Activated B cell treated with CpG ODN at 0.5 μM for 24 hours (primary cell): ENCODE measurements at regions of chr14 and their contacts with region 1.

Region 1: DNA sequence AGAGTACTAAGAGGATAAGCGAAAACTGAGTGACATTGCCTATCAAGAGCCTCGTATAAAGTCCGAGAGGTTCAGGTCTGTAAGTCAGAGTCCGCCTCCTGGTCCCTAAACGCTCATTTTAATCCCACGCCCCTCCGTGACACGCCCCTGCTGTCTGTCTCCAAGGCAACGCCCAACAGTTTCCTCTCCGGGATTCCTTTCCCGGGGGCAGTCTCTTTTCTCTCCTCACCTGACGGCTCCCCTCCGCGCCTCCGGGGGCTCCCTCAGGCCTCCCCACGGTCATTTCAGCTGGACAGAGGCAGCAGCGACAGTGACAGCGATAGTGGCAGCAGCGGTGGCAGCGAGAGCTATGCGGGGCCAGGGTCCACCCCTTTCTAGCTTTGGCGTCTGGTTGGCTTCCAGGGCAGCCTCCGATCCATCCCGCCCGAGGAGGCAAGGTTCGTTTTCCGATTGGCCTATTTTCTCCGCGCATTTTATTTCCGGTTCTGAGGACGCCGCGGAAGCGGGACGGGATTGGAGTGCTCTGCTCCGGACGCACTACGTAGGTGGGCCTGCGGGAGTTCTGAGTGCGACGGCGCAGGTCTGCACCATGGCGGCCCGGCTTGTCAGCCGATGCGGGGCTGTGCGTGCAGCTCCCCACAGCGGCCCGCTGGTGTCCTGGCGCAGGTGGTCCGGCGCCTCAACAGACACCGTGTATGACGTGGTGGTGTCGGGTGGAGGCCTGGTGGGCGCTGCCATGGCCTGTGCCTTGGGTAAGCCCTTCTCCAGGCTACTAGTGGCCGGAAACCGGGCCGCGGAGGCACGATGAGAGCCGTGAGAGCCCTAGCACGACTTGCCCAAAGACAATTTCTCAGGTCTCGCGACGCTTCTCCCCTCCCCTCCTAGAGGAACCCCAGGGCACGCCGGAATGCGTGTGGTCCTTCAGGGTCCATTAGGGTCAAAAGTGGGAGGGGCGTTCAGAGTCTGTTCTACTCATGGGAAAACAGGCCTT is at the starts of genes COQ6 and FAM161B:
- DNase-seq: peak; percentile 84
- ATAC-seq: peak; percentile 92
- H3K4me3 Mint-ChIP-seq: peak within 1 kb of the TSS; percentile 99
- H3K27ac Mint-ChIP-seq: peak within 1 kb of the TSS; percentile 91
- H3K4me1 Mint-ChIP-seq: peaks cover 17% of the 10 kb centered on the region
- H3K27me3 Mint-ChIP-seq: no peaks in the 10 kb centered on the region
- CTCF ChIP-seq: no peak
- total RNA-seq, gene COQ6: 23.0 and 30.7 TPM in 2 replicates
- total RNA-seq, gene FAM161B: 2.3 TPM in 2 replicates

Region 2: DNA sequence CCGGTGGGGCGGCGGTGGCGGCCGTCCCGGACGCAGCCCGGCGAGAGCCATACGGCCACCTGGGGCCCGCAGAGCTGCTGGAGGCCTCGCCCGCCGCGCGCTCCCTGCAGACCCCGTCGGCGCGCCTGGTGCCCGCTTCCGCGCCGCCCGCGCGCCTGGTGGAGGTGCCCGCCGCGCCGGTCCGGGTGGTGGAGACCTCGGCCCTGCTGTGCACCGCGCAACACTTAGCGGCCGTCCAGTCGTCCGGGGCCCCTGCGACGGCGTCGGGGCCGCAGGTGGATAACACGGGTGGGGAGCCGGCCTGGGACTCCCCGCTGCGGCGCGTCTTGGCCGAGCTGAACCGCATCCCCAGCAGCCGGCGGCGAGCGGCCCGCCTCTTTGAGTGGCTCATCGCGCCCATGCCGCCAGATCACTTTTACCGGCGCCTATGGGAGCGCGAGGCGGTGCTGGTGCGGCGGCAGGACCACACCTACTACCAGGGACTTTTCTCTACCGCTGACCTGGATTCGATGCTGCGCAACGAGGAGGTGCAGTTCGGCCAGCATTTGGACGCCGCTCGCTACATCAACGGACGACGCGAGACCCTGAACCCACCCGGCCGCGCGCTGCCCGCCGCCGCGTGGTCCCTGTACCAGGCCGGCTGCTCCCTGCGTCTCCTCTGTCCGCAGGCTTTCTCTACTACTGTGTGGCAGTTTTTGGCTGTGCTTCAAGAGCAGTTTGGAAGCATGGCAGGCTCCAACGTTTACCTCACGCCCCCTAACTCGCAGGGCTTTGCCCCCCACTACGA is 458.6 kb before region 1 on chr14:
- CTCF ChIA-PET with region 1: no interaction called
- POLR2A ChIA-PET with region 1: no interaction called
- intact Hi-C with region 1: no loop called
- DNase-seq: no peak
- ATAC-seq: peak; percentile 51
- H3K4me3 Mint-ChIP-seq: peak overlapping the region; percentile 88
- H3K27ac Mint-ChIP-seq: peak overlapping the region; percentile 80
- H3K4me1 Mint-ChIP-seq: peaks cover 49% of the 10 kb centered on the region
- H3K27me3 Mint-ChIP-seq: no peaks in the 10 kb centered on the region
- CTCF ChIP-seq: no peak

Region 3: GRCh38 chr14:73696466-73697400 is 253.3 kb before region 1 on chr14:
- CTCF ChIA-PET with region 1: no interaction called
- POLR2A ChIA-PET with region 1: interaction called, 13 read pairs
- intact Hi-C with region 1: no loop called
- DNase-seq: no peak
- ATAC-seq: peak; percentile 73
- H3K4me3 Mint-ChIP-seq: peak overlapping the region; percentile 6
- H3K27ac Mint-ChIP-seq: peak overlapping the region; percentile 78
- H3K4me1 Mint-ChIP-seq: peaks cover 11% of the 10 kb centered on the region
- H3K27me3 Mint-ChIP-seq: no peaks in the 10 kb centered on the region
- CTCF ChIP-seq: no peak

Region 4: DNA sequence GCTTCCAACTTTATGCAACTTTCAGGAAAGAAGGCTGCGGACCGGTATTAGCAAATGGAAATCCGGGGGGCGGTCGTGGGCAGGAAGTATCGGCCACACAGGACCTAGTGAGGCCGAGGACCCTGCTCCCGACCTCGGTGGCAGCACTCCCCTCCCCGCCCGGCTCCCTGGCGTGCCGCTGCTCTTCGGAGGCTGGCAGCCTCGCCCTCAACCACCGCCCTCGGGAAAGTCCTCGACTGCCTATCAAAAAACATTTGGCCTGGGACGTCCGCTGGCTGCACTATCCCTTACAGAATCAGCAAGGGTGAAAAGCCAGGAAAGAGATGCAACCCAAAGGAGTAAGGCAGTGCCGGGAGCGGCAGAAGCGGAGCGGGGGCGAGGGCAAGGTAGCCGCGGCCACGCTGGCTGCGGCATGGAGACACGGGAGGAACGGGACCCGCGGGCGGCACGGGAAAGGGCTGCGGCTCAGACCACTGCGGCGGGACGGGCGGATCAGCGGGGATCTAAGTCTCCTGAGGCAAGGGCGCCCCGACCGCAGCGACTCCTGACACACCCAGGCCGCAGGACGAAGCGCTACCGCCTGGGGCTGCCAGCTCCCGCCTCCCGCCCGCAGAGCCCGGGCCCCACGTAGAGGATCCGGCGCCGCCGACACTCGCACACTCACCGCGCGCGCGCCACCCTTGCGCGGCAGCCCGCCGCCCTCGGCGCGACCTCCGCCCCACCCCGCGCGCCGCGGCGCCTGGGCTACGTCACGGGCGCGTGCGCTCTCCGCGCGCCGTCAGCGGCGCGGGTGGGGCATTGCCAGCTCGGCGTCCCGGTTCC is 68.8 kb after region 1 on chr14 and contains the starts of genes BBOF1 and ENTPD5:
- CTCF ChIA-PET with region 1: no interaction called
- POLR2A ChIA-PET with region 1: no interaction called
- intact Hi-C with region 1: loop called (anchors 1 kb)
- DNase-seq: peak; percentile 82
- ATAC-seq: peak; percentile 96
- H3K4me3 Mint-ChIP-seq: peak within 1 kb of the TSS; percentile 95
- H3K27ac Mint-ChIP-seq: peak within 1 kb of the TSS; percentile 88
- H3K4me1 Mint-ChIP-seq: peaks cover 14% of the 10 kb centered on the region
- H3K27me3 Mint-ChIP-seq: no peaks in the 10 kb centered on the region
- CTCF ChIP-seq: no peak
- total RNA-seq, gene BBOF1: 1.6 and 2.2 TPM in 2 replicates
- total RNA-seq, gene ENTPD5: 9.3 and 10.4 TPM in 2 replicates

Region 5: DNA sequence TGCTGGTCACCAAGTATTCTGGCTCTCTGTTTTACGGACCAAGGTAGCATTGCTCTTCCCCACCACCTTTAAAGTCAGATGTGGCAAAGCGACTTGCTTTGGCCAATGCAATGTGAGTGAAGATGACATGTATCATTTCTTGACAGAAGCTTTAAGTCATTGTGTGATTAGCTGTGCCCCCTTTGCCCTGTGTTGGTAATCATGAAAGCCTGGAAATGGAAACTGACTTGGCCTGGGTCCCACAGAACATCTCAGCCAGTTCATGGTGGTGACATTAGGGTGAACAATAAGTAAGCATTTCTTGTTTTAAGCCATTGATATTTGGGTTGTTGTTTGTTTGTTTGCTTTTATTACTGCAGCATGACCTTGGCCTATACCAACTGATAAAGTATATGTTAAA is 797.2 kb after region 1 on chr14:
- CTCF ChIA-PET with region 1: no interaction called
- POLR2A ChIA-PET with region 1: interaction called, 13 read pairs
- intact Hi-C with region 1: no loop called
- DNase-seq: no peak
- ATAC-seq: no peak
- H3K4me3 Mint-ChIP-seq: no peak overlapping the region
- H3K27ac Mint-ChIP-seq: no peak overlapping the region
- H3K4me1 Mint-ChIP-seq: no peaks in the 10 kb centered on the region
- H3K27me3 Mint-ChIP-seq: no peaks in the 10 kb centered on the region
- CTCF ChIP-seq: no peak